ENCODE measurements at regions of chr5 and their contacts with region 1.

Region 1: GRCh38 chr5:149434162-149435014 is 55.3 kb upstream of the IL17B start:
- DNase-seq: peak; percentile 73
- H3K4me3 Mint-ChIP-seq: no peak overlapping the region
- H3K27ac Mint-ChIP-seq: no peak overlapping the region
- H3K4me1 Mint-ChIP-seq: peaks cover 14% of the 10 kb centered on the region
- H3K27me3 Mint-ChIP-seq: no peaks in the 10 kb centered on the region

Region 2: DNA sequence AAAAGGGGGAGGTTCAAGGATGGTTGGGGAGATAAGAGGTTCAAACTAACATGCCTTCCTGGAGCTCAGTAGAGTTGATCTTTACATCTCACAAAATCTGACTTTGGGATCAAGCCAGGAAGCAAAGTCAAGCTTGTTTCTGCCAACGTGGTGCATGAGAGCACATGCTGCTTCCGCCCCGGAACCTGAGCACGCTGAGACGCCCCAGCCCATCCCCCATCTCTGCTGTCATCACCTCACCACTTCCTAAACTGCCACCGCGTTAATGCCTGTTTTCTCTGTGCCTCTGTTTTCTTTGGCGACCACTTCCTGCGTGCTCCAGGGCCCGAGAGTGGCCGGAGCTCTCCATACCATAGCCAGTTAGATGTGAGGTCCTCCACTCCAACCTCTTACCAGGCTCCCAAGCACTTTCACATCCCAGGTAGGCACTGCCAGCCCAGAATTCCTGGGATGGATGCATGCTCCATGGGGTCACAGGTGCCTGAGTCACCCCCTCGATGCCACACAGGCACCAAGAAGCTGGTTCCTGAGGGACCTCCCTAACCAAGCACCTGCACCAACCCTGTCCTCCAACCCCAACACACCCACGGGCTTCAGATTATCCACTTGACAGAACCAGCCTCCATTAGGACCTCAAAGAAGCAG is 193.9 kb before region 1 on chr5:
- CTCF ChIA-PET with region 1: no interaction called
- intact Hi-C with region 1: no loop called
- DNase-seq: peak; percentile 95
- H3K4me3 Mint-ChIP-seq: peak overlapping the region; percentile 19
- H3K27ac Mint-ChIP-seq: peak overlapping the region; percentile 80
- H3K4me1 Mint-ChIP-seq: peaks cover 33% of the 10 kb centered on the region
- H3K27me3 Mint-ChIP-seq: no peaks in the 10 kb centered on the region

Region 3: GRCh38 chr5:149317281-149318048 is 116.9 kb before region 1 on chr5:
- CTCF ChIA-PET with region 1: interaction called, 39 read pairs
- intact Hi-C with region 1: loop called (anchors 1 kb)
- DNase-seq: peak; percentile 58
- H3K4me3 Mint-ChIP-seq: no peak overlapping the region
- H3K27ac Mint-ChIP-seq: no peak overlapping the region
- H3K4me1 Mint-ChIP-seq: no peaks in the 10 kb centered on the region
- H3K27me3 Mint-ChIP-seq: no peaks in the 10 kb centered on the region

Region 4: GRCh38 chr5:149374286-149374685 is 60.1 kb before region 1 on chr5:
- CTCF ChIA-PET with region 1: interaction called, 79 read pairs
- intact Hi-C with region 1: no loop called
- DNase-seq: no peak
- H3K4me3 Mint-ChIP-seq: no peak overlapping the region
- H3K27ac Mint-ChIP-seq: no peak overlapping the region
- H3K4me1 Mint-ChIP-seq: peaks cover 5% of the 10 kb centered on the region
- H3K27me3 Mint-ChIP-seq: no peaks in the 10 kb centered on the region

Region 5: GRCh38 chr5:149387081-149387631 is 47.2 kb before region 1 on chr5:
- CTCF ChIA-PET with region 1: interaction called, 79 read pairs
- intact Hi-C with region 1: loop called (anchors 1 kb)
- DNase-seq: no peak
- H3K4me3 Mint-ChIP-seq: no peak overlapping the region
- H3K27ac Mint-ChIP-seq: no peak overlapping the region
- H3K4me1 Mint-ChIP-seq: peaks cover 4% of the 10 kb centered on the region
- H3K27me3 Mint-ChIP-seq: no peaks in the 10 kb centered on the region

Region 6: DNA sequence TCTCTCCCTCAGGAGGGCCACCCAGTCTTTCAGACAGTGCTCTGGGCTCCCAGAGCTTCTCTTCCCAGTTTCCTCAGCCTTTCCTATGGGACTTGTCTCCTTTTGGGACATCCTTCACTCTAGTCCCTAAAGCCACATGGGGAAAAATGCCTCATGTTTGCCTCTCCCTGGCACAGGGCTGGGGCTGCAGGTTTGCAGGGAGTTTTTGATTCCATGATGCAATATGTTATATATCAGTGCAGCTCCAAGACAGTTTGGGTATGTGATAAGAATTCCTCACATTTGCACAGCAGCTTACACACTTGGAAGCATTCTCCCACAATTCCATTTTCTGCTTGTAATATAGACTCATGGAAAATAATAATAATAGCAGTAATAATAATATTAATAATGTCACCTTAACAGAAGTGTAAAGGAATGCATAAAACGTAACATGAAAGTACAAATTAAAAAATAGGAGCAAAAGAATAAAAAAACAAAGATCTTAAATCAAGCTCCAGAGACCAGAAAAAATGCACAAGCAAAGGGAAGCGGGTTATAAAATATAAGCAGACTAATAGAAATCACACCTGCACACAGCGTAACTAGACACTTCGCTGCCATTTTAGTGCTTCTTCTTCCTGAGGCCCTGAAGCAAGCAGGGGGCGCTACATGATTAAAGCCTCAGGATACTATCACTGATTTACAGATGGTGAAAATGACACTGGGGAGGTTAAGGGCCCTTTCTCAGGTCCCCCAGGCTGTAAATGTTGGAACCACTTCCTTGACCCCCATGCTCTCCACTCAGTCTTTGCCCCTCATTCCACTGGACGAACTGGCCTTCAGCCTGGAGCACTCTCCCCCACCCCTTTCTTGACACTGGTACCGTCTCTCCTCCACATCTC is 14.7 kb after region 1 on chr5:
- CTCF ChIA-PET with region 1: interaction called, 43 read pairs
- intact Hi-C with region 1: no loop called
- DNase-seq: peak; percentile 57
- H3K4me3 Mint-ChIP-seq: no peak overlapping the region
- H3K27ac Mint-ChIP-seq: no peak overlapping the region
- H3K4me1 Mint-ChIP-seq: no peaks in the 10 kb centered on the region
- H3K27me3 Mint-ChIP-seq: no peaks in the 10 kb centered on the region

Region 7: DNA sequence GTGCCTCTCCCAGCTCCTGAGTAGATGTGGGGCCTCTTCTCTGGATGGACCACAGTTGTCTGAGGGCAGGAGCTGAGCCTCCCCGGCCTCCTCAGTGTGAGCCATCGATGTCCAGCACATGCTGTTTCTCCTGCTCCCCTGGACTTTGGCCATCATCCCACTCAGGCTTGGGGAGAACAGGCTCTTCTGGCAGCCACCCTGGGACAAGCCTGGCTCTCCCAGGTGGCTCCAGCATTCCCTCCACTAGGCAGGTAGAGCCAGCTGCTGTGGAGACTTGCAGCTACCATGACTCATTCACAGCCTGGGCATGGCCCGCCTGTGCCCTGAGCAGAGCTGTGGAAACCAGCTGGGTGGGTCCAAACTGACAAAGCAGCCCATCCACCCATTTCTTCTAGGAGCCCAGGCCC is 39.8 kb after region 1 on chr5:
- CTCF ChIA-PET with region 1: no interaction called
- intact Hi-C with region 1: no loop called
- DNase-seq: no peak
- H3K4me3 Mint-ChIP-seq: no peak overlapping the region
- H3K27ac Mint-ChIP-seq: no peak overlapping the region
- H3K4me1 Mint-ChIP-seq: no peaks in the 10 kb centered on the region
- H3K27me3 Mint-ChIP-seq: no peaks in the 10 kb centered on the region

Region 8: DNA sequence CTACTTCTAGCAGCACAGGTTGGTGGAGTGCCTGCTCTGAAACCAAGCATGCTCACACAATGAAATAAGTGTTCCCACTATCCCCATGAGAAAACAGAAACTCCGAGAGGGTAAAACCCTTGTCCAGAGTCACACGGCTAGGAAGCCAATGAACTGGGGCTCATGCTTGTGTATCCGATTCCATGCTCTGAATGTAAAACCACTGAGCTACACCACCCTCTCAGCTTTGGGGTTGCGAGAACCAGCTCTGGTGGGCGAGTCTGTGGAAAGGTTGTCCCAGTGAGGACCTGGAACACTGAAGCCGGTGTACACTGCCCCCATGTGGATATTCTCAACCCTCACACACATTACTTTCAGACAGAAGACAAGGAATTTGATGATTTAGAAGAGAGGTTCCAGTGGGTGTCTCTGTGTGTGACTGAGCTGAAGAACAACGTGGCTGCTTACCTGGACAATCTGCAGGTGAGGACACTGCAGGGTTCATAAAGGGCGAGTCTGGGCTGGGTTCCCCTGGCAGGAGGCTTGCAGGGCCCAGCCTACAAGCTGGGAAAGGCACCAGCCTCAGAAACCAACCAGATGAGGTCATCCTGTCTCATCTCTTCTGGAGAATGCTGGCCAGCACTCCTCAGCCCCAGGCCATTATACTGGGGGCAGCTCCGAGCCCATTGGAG is 184.3 kb after region 1 on chr5:
- CTCF ChIA-PET with region 1: interaction called, 9 read pairs
- intact Hi-C with region 1: loop called (anchors 2 kb)
- DNase-seq: peak; percentile 66
- H3K4me3 Mint-ChIP-seq: no peak overlapping the region
- H3K27ac Mint-ChIP-seq: no peak overlapping the region
- H3K4me1 Mint-ChIP-seq: peaks cover 10% of the 10 kb centered on the region
- H3K27me3 Mint-ChIP-seq: no peaks in the 10 kb centered on the region